Dendritic cell treated with granulocyte-macrophage colony-stimulating factor and Interleukin-4, amounts not matched to agents 40 ng/mL and 50 ng/mL, for 4 days (primary cell): ENCODE measurements at regions of chr12 and their contacts with region 1.

Region 1: GRCh38 chr12:8949342-8950220 is at the start of gene M6PR:
- H3K4me3 Mint-ChIP-seq: peak within 1 kb of the TSS; percentile 93
- H3K27ac Mint-ChIP-seq: peak within 1 kb of the TSS; percentile 93
- H3K4me1 Mint-ChIP-seq: peaks cover 31% of the 10 kb centered on the region
- H3K27me3 Mint-ChIP-seq: no peaks in the 10 kb centered on the region

Region 2: DNA sequence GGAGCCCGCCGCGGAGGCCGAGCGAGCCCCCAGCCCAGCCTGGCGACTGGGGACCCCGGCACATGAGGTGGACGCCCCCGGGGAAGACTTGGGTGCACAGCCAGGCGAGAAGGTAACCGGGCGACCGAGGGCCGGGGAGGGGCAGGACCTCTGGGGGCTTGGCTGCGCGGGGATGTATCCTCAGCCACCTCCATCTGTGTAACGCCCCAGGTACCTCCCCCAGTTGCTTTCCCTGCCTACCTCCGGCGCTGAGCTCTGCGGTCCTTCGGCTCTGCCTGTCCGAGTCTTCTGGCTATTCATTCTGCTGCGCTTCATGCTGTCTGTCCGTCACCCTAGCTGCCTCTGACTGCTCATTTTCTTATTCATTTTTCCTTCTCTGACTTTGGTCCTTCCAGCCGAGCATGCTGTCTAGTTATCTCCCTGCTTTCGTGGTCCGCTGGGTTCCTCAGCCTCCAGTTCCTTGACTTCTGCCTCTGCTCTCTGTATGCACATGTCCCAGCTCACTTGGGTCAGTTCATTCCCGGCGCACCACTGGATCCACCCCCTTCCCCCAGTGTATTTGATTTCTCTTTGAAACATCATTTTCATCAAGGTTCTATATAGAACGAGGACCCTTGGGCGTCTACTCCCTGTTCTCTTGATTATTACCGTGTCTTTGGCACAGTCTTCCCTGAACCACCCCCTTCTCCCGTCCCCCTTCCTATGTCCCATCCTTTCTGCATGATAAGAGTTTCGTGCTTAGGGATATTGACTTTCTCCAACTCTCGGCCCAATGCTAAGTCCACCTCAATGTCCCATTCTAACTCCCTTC is 34.7 kb before region 1 on chr12:
- intact Hi-C with region 1: loop called (anchors 2 kb)
- H3K4me3 Mint-ChIP-seq: no peak overlapping the region
- H3K27ac Mint-ChIP-seq: no peak overlapping the region
- H3K4me1 Mint-ChIP-seq: peaks cover 12% of the 10 kb centered on the region
- H3K27me3 Mint-ChIP-seq: peaks cover 11% of the 10 kb centered on the region

Region 3: GRCh38 chr12:8936735-8937134 is 12.8 kb before region 1 on chr12:
- intact Hi-C with region 1: no loop called
- H3K4me3 Mint-ChIP-seq: no peak overlapping the region
- H3K27ac Mint-ChIP-seq: peak overlapping the region; percentile 45
- H3K4me1 Mint-ChIP-seq: peaks cover 15% of the 10 kb centered on the region
- H3K27me3 Mint-ChIP-seq: no peaks in the 10 kb centered on the region

Region 4: DNA sequence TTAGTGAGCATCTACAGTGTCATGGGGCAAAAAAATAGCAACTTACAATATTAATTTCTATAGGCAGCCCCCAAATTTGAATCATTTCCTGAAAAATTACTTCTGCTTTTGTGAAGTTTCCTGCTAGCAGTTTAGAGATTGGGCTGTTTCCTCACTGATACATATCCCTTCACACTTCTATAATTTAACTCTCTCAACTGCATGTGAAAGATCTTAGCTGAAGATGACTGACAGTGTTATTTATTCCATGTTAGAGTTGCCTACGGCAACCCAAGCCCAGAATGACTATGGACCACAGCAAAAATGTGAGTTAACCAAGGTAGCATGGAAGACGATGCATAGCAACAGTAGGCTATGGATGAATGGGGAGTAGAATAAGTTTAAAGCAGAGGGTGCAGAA is 39.8 kb after region 1 on chr12 and contains the start of gene KLRG1:
- intact Hi-C with region 1: loop called (anchors 5 kb)
- H3K4me3 Mint-ChIP-seq: no peak within 1 kb of the TSS
- H3K27ac Mint-ChIP-seq: peak within 1 kb of the TSS; percentile 58
- H3K4me1 Mint-ChIP-seq: peaks cover 56% of the 10 kb centered on the region
- H3K27me3 Mint-ChIP-seq: no peaks in the 10 kb centered on the region

Region 5: DNA sequence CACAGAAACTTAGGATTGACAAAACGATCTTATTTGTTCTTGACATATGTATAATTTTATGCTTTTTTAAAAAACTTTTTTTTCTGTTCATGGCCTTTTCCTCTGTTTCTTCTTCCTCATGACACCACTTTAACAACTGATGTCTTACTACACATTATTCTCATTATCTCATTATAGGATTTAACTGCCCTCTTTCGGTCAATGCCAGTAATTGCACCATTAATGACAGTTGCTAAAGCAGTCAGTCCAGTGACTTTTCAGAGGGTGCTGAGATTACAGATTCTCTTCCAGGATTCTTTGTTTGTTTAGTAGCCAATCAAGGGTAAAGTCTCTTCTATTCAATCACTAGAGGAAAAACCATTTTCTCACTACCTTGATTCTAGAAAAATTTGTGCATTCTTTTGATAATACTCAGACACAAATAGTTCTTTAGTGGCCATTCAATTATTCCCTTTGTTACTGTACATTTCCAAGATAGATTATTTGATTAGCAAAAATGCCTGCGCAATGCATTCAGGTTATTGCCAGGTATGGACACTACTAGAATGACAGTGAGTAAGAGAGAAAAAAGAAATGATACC is 89.9 kb after region 1 on chr12:
- intact Hi-C with region 1: loop called (anchors 1 kb)
- H3K4me3 Mint-ChIP-seq: no peak overlapping the region
- H3K27ac Mint-ChIP-seq: no peak overlapping the region
- H3K4me1 Mint-ChIP-seq: no peaks in the 10 kb centered on the region
- H3K27me3 Mint-ChIP-seq: peaks cover 4% of the 10 kb centered on the region

Region 6: DNA sequence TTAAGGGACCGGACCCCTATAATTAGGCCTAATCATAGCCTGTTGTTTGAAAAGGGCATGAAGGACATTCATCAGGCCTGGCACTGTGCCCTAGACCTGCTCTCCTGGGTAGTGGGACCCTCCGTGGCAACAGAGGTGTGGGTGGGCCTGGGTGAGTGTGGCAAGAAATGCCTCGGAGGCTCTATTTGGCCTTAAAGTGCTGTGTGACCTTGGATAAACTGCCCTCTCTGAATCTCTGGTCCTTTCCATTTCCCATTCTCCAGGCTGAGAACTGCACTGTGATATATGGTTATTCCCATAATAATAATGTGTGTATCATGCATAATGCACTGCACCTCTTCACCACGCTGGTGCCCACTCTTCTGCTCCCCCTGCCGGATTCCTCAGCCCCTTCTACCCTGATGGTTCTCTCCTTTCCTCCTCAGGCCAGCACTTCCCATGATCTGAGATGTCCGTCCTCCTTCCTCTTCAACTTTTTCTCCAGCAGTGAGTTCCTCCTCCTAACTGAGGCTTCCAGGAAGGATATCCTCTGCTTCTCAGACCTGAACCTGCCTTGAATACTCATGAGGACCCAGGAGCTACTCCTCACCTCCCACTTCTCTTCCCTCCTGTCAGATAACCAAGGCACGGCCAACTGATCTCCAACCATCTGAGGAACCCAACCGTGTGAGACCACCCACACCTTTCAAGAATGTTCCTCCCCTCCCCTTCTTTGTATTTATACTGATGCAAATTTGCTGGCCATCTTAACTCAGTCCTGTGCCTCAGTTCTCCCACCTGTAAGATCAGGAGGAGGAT is 369.7 kb after region 1 on chr12:
- intact Hi-C with region 1: no loop called
- H3K4me3 Mint-ChIP-seq: no peak overlapping the region
- H3K27ac Mint-ChIP-seq: no peak overlapping the region
- H3K4me1 Mint-ChIP-seq: peaks cover 8% of the 10 kb centered on the region
- H3K27me3 Mint-ChIP-seq: peaks cover 2% of the 10 kb centered on the region